Caco-2 (cell line): ENCODE measurements at regions of chr18 and their contacts with region 1.

Region 1: DNA sequence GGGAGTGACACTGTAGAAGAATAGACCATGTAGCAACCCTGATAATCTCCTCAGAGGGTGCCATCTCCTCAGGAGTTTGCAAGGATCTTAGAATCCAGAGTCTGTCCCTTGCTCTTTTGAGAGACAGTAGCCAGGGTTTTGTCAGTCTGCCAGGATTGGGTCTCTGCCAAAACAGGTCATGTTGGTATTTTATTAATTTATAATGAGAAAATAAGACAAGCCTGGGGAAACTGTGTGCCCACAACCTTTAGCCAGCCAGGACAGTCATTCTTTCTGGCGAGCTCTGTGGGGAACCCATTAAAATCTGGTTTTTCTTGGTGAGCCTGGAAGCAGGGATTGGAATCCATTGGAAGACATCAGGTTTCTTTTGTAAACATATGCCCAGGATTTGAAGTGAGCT is 78.6 kb downstream of the PTPRM start:
- DNase-seq: no peak
- H3K4me3 ChIP-seq: no peak overlapping the region
- H3K4me3 Mint-ChIP-seq: peak overlapping the region; percentile 58
- H3K27ac Mint-ChIP-seq: peak overlapping the region; percentile 72
- H3K4me1 ChIP-seq: peaks cover 79% of the 10 kb centered on the region
- H3K4me1 Mint-ChIP-seq: peaks cover 41% of the 10 kb centered on the region
- H3K27me3 ChIP-seq: no peaks in the 10 kb centered on the region
- H3K27me3 Mint-ChIP-seq: no peaks in the 10 kb centered on the region
- CTCF ChIP-seq: no peak

Region 2: GRCh38 chr18:7617738-7618422 is 27.9 kb before region 1 on chr18:
- CTCF ChIA-PET with region 1: no interaction called
- POLR2A ChIA-PET with region 1: no interaction called
- intact Hi-C with region 1: no loop called
- DNase-seq: no peak
- H3K4me3 ChIP-seq: no peak overlapping the region
- H3K4me3 Mint-ChIP-seq: peak overlapping the region; percentile 27
- H3K27ac Mint-ChIP-seq: peak overlapping the region; percentile 30
- H3K4me1 ChIP-seq: peaks cover 33% of the 10 kb centered on the region
- H3K4me1 Mint-ChIP-seq: peaks cover 37% of the 10 kb centered on the region
- H3K27me3 ChIP-seq: no peaks in the 10 kb centered on the region
- H3K27me3 Mint-ChIP-seq: no peaks in the 10 kb centered on the region
- CTCF ChIP-seq: no peak

Region 3: DNA sequence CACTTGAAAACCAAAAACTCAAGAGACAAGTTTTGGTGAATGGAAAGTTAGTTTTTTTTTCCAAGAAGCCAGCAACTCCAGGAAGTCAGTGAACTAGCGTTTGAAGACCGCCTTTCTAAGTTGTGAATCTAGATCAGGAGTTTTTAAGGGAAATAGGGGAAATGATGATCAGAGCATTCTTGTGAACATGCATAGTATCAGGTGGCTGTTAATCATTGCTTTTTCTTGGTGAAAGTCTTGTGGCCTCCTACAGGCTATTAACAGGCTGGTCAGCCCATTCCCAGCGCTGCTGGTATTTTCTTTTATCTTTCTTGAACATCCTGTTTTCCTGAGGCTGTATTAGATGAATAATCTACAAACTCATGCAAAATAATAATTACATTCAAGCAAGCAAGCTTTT is 77.2 kb after region 1 on chr18:
- CTCF ChIA-PET with region 1: no interaction called
- POLR2A ChIA-PET with region 1: no interaction called
- intact Hi-C with region 1: loop called (anchors 5 kb)
- DNase-seq: no peak
- H3K4me3 ChIP-seq: no peak overlapping the region
- H3K4me3 Mint-ChIP-seq: no peak overlapping the region
- H3K27ac Mint-ChIP-seq: peak overlapping the region; percentile 18
- H3K4me1 ChIP-seq: peaks cover 18% of the 10 kb centered on the region
- H3K4me1 Mint-ChIP-seq: peaks cover 16% of the 10 kb centered on the region
- H3K27me3 ChIP-seq: no peaks in the 10 kb centered on the region
- H3K27me3 Mint-ChIP-seq: no peaks in the 10 kb centered on the region
- CTCF ChIP-seq: no peak

Region 4: DNA sequence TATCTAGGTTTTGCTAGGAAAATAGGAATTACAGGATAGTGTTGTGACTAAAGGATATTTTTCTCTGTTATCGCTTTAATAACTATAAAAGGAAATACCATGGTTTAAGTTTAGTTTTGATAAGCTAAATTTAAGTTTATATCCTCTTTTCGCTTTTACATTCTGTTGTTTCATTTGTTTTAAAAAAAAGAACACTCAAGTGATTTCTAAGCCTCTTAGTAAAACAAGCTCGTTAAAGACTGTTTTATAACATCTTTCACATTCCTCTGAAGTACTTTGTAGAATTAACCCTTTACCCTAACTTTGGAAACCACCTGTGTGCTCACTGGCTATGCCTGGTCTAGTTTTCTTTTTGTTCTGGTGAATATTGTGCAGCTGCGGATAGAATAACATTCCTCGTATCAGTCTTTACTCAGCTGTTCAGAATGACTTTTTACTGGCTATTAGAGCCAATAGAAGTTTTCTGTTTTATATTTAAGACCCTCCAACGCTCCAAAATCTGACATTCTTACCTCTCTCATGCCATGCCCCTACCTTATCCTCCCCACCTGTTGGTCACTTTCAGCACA is 104.4 kb after region 1 on chr18:
- CTCF ChIA-PET with region 1: no interaction called
- POLR2A ChIA-PET with region 1: interaction called, 5 read pairs
- intact Hi-C with region 1: loop called (anchors 1 kb)
- DNase-seq: no peak
- H3K4me3 ChIP-seq: no peak overlapping the region
- H3K4me3 Mint-ChIP-seq: peak overlapping the region; percentile 47
- H3K27ac Mint-ChIP-seq: peak overlapping the region; percentile 54
- H3K4me1 ChIP-seq: peaks cover 81% of the 10 kb centered on the region
- H3K4me1 Mint-ChIP-seq: peaks cover 65% of the 10 kb centered on the region
- H3K27me3 ChIP-seq: no peaks in the 10 kb centered on the region
- H3K27me3 Mint-ChIP-seq: no peaks in the 10 kb centered on the region
- CTCF ChIP-seq: no peak

Region 5: DNA sequence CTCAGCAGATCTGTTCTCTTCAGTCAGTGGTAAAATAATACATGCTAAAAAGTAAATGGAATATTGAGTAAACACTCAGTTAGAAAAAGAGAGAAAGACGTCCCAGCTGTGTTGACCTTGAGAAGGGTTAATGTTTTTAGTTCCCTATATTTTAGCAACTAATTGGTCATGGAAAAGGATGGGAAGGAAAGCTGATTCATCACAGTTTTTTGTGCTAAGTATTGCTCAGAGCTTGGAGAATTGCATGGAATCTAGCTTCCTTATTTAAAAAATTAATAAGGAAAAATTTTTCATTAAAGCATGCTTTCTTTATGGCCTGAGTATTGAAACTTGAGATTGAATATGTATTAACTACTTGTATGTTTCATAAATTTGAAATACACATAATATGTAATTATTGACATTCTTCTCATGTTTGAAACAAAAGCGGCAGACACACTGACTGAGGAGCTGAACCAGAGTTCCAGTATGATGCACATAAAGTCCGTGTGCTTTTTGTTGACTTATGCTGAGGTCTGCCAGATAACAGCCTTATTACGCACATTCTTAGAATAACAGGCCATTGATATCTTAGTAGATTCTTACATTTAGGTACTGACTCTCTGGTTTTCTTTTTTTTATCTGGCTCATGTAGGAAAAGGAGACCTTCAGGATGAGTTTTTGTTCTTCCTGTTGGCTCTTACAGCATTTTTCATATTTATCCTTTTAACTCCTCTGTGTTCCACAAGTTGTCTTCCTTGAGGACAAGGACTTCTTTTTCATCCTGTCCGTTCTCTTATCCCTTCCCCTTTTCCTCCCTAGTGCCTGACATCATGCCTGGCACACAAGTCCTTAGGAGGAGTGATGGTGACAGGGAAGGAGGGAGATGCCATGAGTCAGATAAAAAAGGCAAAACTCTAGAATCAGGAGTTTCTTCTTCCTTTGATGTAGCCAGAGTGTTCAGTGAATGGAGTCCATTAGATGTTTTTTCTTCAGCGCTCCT is 115.5 kb after region 1 on chr18:
- CTCF ChIA-PET with region 1: interaction called, 4 read pairs
- POLR2A ChIA-PET with region 1: no interaction called
- intact Hi-C with region 1: loop called (anchors 1 kb)
- DNase-seq: peak; percentile 55
- H3K4me3 ChIP-seq: no peak overlapping the region
- H3K4me3 Mint-ChIP-seq: peak overlapping the region; percentile 51
- H3K27ac Mint-ChIP-seq: peak overlapping the region; percentile 87
- H3K4me1 ChIP-seq: peaks cover 83% of the 10 kb centered on the region
- H3K4me1 Mint-ChIP-seq: peaks cover 63% of the 10 kb centered on the region
- H3K27me3 ChIP-seq: no peaks in the 10 kb centered on the region
- H3K27me3 Mint-ChIP-seq: no peaks in the 10 kb centered on the region
- CTCF ChIP-seq: no peak